ENCODE measurements at regions of chr15 and their contacts with region 1.

Region 1: DNA sequence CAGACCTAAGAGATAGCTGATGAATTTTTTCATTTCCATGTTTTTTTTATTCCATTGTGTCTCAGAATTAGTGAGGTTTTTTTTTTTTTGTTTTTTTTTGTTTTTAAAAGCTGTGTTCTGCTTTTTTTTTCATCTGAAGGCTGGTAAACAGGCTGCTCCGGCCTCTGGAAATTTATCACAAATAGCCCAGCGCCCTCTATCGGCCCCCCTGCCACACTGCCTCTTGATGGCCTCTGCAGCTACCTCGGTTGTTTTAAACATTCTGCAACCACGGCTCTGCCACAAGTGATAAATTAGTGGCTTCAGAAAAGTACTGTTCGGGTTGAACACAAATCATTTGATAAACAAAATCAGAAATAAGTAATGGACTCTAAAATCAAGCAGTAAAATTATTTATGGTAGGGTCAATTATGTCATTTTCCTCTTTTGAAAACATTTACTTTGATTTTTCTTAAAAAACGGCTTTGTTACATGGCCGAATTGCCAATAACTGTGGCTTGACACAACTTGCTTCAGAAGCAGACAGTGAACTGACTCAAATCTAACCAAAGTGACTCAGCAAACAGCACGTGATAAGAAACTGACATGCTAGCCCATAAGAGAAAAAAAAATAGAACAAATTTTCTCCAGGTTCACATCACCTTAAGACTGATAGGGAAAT is 87.8 kb downstream of the RSL24D1 start:
- DNase-seq: peak; percentile 49 to 71
- H3K4me3 ChIP-seq: no peak overlapping the region
- H3K4me3 Mint-ChIP-seq: no peak overlapping the region
- H3K27ac Mint-ChIP-seq: no peak overlapping the region
- H3K4me1 ChIP-seq: no peaks in the 10 kb centered on the region
- H3K4me1 Mint-ChIP-seq: no peaks in the 10 kb centered on the region
- H3K27me3 ChIP-seq: no peaks in the 10 kb centered on the region
- H3K27me3 Mint-ChIP-seq: no peaks in the 10 kb centered on the region
- CTCF ChIP-seq: peak; percentile 73 to 82

Region 2: GRCh38 chr15:53962332-53963241 is 1146.4 kb before region 1 on chr15:
- CTCF ChIA-PET with region 1: no interaction called
- POLR2A ChIA-PET with region 1: no interaction called
- intact Hi-C with region 1: loop called (anchors 5 kb)
- DNase-seq: peak; percentile 45 to 47
- H3K4me3 ChIP-seq: no peak overlapping the region
- H3K4me3 Mint-ChIP-seq: no peak overlapping the region
- H3K27ac Mint-ChIP-seq: no peak overlapping the region
- H3K4me1 ChIP-seq: 0 out of 2 replicates have a peak, but pooled peaks cover 6% of the 10 kb centered on the region
- H3K4me1 Mint-ChIP-seq: no peaks in the 10 kb centered on the region
- H3K27me3 ChIP-seq: no peaks in the 10 kb centered on the region
- H3K27me3 Mint-ChIP-seq: no peaks in the 10 kb centered on the region
- CTCF ChIP-seq: peak; percentile 63 to 64

Region 3: DNA sequence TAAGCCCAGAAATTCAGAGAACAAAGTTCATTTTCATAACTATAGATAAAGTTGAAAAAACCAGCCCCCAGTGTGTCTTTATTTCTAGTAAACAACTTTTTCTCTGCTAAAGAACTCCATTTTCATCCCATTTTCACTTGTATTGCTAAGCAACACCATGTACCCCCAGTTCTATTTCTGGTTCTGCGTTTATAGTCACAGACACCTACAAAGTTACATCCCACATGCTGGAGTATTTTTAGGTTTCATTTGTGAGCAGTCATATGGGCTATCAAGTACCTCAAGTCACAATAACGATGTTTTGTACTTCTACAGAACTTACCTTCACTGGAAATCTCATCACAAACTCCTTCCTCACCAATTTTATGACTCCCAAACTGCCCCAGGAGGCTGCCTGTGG is 148.7 kb before region 1 on chr15:
- CTCF ChIA-PET with region 1: no interaction called
- POLR2A ChIA-PET with region 1: no interaction called
- intact Hi-C with region 1: loop called (anchors 5 kb)
- DNase-seq: no peak
- H3K4me3 ChIP-seq: no peak overlapping the region
- H3K4me3 Mint-ChIP-seq: no peak overlapping the region
- H3K27ac Mint-ChIP-seq: no peak overlapping the region
- H3K4me1 ChIP-seq: no peaks in the 10 kb centered on the region
- H3K4me1 Mint-ChIP-seq: no peaks in the 10 kb centered on the region
- H3K27me3 ChIP-seq: no peaks in the 10 kb centered on the region
- H3K27me3 Mint-ChIP-seq: peaks cover 2% of the 10 kb centered on the region
- CTCF ChIP-seq: no peak

Region 4: GRCh38 chr15:55031727-55032126 is 77.3 kb before region 1 on chr15:
- CTCF ChIA-PET with region 1: no interaction called
- POLR2A ChIA-PET with region 1: no interaction called
- intact Hi-C with region 1: loop called (anchors 2 kb)
- DNase-seq: no peak
- H3K4me3 ChIP-seq: no peak overlapping the region
- H3K4me3 Mint-ChIP-seq: no peak overlapping the region
- H3K27ac Mint-ChIP-seq: no peak overlapping the region
- H3K4me1 ChIP-seq: no peaks in the 10 kb centered on the region
- H3K4me1 Mint-ChIP-seq: no peaks in the 10 kb centered on the region
- H3K27me3 ChIP-seq: no peaks in the 10 kb centered on the region; the same call in 1 of the 2 replicates
- H3K27me3 Mint-ChIP-seq: peaks cover 9% of the 10 kb centered on the region
- CTCF ChIP-seq: no peak

Region 5: GRCh38 chr15:55297315-55297714 is 188.3 kb after region 1 on chr15:
- CTCF ChIA-PET with region 1: no interaction called
- POLR2A ChIA-PET with region 1: no interaction called
- intact Hi-C with region 1: no loop called
- DNase-seq: no peak
- H3K4me3 ChIP-seq: no peak overlapping the region
- H3K4me3 Mint-ChIP-seq: no peak overlapping the region
- H3K27ac Mint-ChIP-seq: no peak overlapping the region
- H3K4me1 ChIP-seq: no peaks in the 10 kb centered on the region
- H3K4me1 Mint-ChIP-seq: no peaks in the 10 kb centered on the region
- H3K27me3 ChIP-seq: no peaks in the 10 kb centered on the region
- H3K27me3 Mint-ChIP-seq: no peaks in the 10 kb centered on the region
- CTCF ChIP-seq: no peak